Common myeloid progenitor, CD34-positive (primary cell): ENCODE measurements at regions of chr12 and their contacts with region 1.

Region 1: GRCh38 chr12:42237052-42237852 is 796 bp downstream of the YAF2 start:
- DNase-seq: peak; percentile 86 to 94 (median 90)
- H3K4me3 ChIP-seq: peak overlapping the region; percentile 71 to 98 (median 88)
- H3K27ac ChIP-seq: peak overlapping the region; percentile 82 to 83
- H3K4me1 ChIP-seq: peaks cover 15 to 39% (median 25%) of the 10 kb centered on the region in 4 experiments
- H3K27me3 ChIP-seq: no peaks in the 10 kb centered on the region

Region 2: GRCh38 chr12:42213954-42214426 is 23.3 kb before region 1 on chr12:
- CTCF ChIA-PET with region 1: interaction called, 11 read pairs
- POLR2A ChIA-PET with region 1: no interaction called
- DNase-seq: no peak
- H3K4me3 ChIP-seq: no peak overlapping the region
- H3K27ac ChIP-seq: no peak overlapping the region
- H3K4me1 ChIP-seq: peaks cover 0 to 12% (median 2%) of the 10 kb centered on the region in 4 experiments
- H3K27me3 ChIP-seq: no peaks in the 10 kb centered on the region